Mammary epithelial cell (primary cell): ENCODE measurements at regions of chr21 and their contacts with region 1.

Region 1: DNA sequence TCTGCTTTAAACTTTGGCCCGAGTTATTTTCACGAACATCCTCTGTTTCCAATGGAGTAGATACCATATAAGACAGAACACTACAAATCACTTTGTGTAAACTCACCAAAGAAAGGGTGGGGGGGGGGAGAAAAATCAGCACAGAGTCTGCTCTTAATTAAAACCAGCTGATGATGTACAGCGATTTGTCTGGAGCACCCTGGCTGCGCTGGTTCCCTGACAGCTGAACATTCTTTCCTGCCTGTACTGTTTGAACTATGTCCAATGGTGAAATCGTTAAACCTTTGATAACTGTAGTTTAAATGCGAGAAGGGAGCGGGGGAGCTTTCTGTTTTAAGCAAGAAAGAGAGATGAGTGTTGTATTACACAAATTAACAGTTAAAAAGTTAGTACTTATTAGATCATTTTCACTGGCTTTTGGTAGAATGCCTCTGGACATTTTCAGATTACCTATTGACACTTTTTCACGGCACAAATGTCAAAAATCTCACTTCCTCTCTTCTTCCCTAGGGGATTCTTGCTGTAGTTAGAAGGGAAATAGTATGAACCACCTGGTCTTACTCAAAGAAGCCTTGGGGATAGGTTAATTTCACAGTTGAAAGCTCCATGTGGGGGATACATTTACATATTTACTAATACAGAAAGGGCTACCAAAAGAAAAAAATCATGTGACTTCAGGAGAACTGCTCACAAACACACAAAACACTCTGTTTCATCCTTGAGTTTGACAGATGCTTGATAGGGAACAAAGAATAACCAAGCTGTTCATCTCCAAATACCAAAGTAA is 140.2 kb upstream of the RUNX1 start:
- DNase-seq: peak; percentile 20
- H3K4me3 ChIP-seq: no peak overlapping the region
- H3K27ac ChIP-seq: peak overlapping the region; percentile 62
- H3K4me1 ChIP-seq: peaks cover 20% of the 10 kb centered on the region
- H3K27me3 ChIP-seq: no peaks in the 10 kb centered on the region
- CTCF ChIP-seq: no peak

Region 2: GRCh38 chr21:34667761-34668160 is 521.5 kb before region 1 on chr21:
- CTCF ChIA-PET with region 1: no interaction called
- dilution Hi-C with region 1: no loop called
- in situ Hi-C with region 1: no loop called
- intact Hi-C with region 1: no loop called
- DNase-seq: no peak
- H3K4me3 ChIP-seq: no peak overlapping the region
- H3K27ac ChIP-seq: no peak overlapping the region
- H3K4me1 ChIP-seq: peaks cover 7% of the 10 kb centered on the region
- H3K27me3 ChIP-seq: peaks cover 34% of the 10 kb centered on the region
- CTCF ChIP-seq: no peak

Region 3: GRCh38 chr21:35275760-35276159 is 86.5 kb after region 1 on chr21:
- CTCF ChIA-PET with region 1: no interaction called
- dilution Hi-C with region 1: loop called (anchors 5 kb)
- in situ Hi-C with region 1: no loop called
- intact Hi-C with region 1: no loop called
- DNase-seq: peak; percentile 98
- H3K4me3 ChIP-seq: peak overlapping the region in 1 of 3 experiments; percentile 34
- H3K27ac ChIP-seq: peak overlapping the region; percentile 97
- H3K4me1 ChIP-seq: peaks cover 34% of the 10 kb centered on the region
- H3K27me3 ChIP-seq: no peaks in the 10 kb centered on the region
- CTCF ChIP-seq: no peak